ENCODE measurements at regions of chr20 and their contacts with region 1.

Region 1: DNA sequence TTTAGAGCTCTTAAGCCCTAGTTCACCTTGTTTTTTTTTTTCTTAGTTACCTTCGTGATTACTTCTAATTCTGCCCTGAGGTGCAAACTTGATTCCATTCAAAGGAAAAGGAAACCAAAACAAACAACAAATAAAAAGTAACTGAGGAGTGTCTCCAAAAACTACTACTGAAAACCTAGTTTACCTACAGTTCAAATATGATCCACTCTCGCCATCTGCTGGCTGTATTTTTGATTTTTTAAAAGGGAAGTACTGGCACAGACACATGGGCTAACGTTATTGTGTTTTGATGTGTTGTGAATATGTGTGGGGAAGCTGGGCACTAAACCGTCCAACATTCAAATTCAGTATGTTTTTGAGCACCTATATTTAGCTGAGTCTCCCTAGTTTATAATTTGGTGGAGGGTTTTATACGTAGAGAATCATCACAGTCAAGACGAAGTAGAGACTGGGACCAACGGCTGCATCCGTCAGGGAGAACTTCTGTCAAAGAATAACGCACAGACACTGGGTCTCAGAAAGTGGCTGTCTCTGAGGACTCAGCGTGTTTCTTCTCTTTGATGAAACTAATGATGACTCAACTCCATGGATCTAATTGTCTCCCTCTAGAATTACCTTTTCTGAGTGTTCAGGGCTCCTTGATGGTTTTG is 373.5 kb upstream of the BTBD3 start:
- DNase-seq: no peak

Region 2: DNA sequence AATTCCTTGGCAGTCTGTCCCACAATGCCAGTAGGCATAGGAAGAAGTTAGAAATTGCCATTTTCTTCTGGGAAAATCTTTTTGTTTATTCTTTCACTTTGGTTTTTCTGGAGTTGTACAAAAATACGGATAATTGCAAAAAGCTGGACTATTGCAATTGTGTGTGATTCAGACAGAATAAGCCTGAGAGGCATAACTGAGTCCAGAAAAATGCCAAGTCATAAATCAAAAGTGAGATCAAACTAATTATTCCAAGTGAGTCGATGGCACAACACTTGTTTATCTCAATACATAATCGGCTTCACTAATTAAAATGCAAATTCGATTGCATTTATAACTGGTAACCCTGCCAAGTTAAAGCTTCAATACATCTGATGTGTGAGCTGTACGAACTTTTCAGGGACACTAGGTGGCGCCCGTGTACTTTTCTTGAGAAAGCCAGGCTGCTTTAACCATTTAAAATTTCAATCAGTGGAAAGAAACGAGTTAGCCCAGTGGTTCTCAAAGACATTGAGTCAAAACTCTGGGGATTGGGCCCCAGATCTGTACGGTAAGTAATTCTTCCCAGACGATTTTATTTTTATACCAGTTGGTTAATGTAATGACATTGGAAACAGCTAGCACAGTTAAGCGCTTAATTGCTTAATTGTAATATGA is 1927.2 kb before region 1 on chr20:
- intact Hi-C with region 1: loop called (anchors 10 kb)
- DNase-seq: no peak

Region 3: DNA sequence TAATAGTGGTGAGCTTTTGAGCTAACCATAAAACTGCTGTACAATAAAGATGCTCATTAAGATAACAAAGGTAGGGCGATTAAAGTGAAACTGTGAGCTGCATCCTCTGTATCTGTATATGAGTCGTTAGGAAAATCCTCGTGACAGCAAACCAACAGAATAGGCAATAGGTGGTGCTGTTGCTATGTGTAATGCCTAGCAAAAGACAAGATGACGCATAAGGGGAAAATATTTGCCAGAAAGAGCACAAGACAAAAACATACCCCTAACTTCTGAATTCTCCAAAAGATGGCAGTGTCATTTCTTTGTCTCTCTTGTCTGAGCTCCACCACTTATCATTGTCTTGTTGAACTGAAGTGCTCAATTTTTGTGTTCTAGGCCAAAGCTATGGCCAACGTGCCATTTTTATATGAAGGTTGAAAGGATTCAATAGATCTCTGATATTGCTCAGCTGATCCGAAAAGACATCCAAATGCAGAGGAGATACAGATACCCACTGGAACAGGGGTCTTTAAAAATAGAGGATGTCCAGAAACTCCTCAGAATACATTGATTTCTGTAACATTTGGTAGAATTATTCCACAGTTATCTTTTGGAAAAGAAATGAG is 1565.7 kb before region 1 on chr20:
- intact Hi-C with region 1: loop called (anchors 10 kb)
- DNase-seq: no peak

Region 4: DNA sequence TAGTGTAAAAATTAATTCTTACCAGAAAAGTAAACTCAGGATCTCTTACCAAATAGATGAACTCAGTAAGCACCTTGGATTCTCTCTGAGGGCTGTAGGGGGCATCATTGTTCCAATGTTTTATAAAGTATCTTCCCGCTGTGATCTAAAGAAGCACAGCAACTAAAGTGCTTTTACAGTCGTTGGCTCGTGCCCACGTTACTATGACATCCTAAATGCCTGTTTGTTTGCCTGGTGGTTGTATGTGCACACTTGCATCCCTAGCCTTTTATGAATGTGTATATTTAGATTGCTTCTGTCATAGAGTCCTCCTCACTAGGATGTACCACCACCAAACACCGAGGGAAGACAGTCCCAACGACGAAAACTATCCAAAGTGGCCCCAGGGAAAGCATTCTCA is 1074.6 kb before region 1 on chr20:
- intact Hi-C with region 1: loop called (anchors 2 kb)
- DNase-seq: no peak

Region 5: DNA sequence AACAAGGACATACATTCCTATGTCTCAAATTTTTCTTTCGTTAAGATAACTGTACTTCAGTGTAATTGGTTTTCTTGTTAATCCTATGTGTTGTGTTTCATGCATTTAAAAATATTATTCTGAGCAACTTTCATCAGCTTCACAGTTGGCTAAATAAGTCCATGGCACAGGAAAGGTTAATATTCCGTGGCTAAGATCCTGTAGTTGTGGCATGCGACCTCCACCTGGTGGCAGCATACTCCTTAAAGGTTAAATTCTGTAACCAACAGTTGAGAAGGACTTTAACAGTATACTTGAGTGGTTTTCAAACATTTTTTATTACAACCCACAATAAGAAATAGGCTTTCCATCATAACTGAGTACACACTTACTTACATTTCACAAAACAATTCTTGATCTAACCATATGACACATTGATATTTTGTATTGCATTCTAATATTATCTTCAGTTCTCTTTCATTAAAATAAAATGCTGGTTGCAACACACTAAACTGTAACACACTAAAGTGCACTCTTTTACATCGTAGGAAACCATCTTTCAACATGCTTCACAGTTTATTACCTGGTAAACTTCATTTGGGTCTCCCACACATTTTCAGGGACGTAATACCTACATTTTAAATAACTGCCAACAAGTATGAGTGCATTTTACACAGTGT is 990.7 kb before region 1 on chr20:
- intact Hi-C with region 1: loop called (anchors 10 kb)
- DNase-seq: no peak

Region 6: GRCh38 chr20:10696650-10697049 is 847.5 kb before region 1 on chr20:
- intact Hi-C with region 1: loop called (anchors 5 kb)
- DNase-seq: no peak

Region 7: DNA sequence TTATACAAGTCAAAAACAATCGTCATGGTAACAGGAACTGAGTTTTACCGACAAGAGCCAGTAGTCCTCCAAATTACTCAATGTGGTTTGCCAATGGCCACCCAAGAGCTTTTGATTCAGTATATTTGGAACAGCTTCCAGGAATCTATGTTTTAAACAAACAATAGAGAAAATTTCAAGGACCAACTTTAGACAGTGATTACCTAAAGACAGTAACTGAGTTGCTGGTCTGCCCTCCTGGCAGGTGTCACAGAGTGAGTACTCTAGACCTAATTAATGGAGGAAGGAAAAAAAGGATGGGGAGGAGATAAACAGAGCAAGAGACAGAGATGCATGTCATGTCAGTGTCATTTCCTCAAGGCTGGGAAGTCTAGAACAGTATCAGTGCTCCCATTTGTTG is 12.3 kb after region 1 on chr20:
- intact Hi-C with region 1: no loop called
- DNase-seq: no peak